Endothelial cell of umbilical vein (primary cell): ENCODE measurements at regions of chr1 and their contacts with region 1.

Region 1: DNA sequence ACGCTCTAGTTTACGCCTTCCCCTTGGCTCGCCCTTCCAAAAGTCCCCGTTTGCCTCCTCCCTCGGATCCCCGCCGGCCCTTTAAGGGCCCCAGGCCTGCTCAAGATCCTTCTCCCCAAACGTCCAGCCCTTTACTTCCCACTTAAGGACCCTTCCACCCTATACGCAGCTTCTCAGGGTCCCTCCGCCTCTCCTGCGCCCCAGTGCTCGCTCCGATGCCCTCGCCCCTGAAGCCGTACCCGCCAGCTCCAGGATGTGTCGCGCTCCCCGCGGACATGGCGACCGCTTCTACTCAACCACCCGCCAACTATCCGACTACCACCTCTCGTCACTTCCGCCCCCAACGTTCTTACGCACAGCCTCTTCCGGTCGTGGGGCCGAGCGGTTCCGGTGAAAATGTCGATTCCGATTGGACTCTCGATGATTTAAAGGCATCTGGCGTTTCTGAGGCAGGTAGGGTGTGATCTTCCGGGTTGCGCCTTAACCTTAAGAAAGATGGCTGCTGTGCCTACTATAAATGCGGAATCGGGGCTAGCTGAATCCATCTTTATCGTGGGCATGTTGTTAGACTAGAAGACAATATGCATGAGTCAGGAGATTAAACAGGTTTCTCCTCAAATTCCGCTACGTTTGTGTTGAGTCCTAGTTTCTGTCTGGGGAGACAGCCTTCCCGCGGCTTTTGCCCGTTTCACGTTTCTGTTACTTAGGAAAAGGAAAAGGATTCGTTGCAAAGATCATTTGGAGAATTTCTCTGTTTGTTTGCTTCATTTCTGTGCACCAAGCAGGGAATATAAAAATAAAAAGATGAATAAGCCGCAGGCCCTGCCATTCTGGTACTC is at the start of gene KHDC4:
- DNase-seq: peak; percentile 100
- H3K4me3 ChIP-seq: peak within 1 kb of the TSS; percentile 38 to 97 (median 92)
- H3K27ac ChIP-seq: peak within 1 kb of the TSS; percentile 60
- H3K4me1 ChIP-seq: peaks cover 46% of the 10 kb centered on the region
- H3K27me3 ChIP-seq: no peaks in the 10 kb centered on the region
- CTCF ChIP-seq: peak in 1 of 2 donors; percentile 10
- POLR2A ChIP-seq: peak; percentile 85
- total RNA-seq, gene KHDC4: 54.1 and 55.6 TPM in 2 replicates

Region 2: GRCh38 chr1:155859234-155859829 is 75.0 kb before region 1 on chr1 and contains the start of gene SYT11:
- CTCF ChIA-PET with region 1: interaction called, 3 read pairs
- POLR2A ChIA-PET with region 1: no interaction called
- dilution Hi-C with region 1: no loop called
- intact Hi-C with region 1: loop called (anchors 1 kb)
- DNase-seq: peak; percentile 95
- H3K4me3 ChIP-seq: peak within 1 kb of the TSS; percentile 52 to 79 (median 54)
- H3K27ac ChIP-seq: peak within 1 kb of the TSS; percentile 95
- H3K4me1 ChIP-seq: peaks cover 21% of the 10 kb centered on the region
- H3K27me3 ChIP-seq: no peaks in the 10 kb centered on the region
- CTCF ChIP-seq: no peak
- POLR2A ChIP-seq: no peak
- total RNA-seq, gene SYT11: 33.7 and 36.5 TPM in 2 replicates

Region 3: DNA sequence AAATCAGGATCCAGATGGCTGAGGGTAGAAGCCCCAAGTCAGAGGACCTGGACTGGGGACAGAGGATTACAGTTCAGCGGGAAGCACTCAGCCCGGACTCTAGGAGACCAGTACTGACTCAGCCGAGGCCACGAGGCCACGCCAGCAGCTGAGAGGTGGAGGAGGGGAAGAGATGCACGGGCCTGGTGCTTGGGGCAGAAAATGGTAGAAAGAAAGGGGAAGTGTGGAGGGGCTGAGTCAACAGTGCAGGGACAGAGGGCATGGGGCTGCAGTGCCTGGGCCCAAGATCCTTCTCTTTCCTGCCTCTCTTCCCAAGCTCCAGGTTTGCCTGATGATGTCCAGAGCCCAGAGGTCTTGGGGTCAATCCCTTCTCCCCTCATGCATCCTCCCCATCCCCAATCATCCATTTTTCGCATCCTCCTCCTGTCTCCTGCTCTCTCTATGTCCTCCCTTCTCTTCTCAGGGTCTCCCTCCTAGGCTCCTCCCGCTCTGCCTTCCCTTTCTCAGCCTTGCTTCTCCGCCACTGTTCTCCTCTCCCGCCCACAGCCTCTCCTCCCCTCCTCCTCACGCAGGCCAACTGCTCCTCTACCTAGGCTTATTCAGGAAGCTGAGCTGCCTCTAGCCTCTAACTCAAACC is 36.3 kb after region 1 on chr1:
- CTCF ChIA-PET with region 1: interaction called, 20 read pairs
- POLR2A ChIA-PET with region 1: interaction called, 3 read pairs
- dilution Hi-C with region 1: no loop called
- intact Hi-C with region 1: loop called (anchors 1 kb)
- DNase-seq: peak; percentile 91
- H3K4me3 ChIP-seq: no peak overlapping the region
- H3K27ac ChIP-seq: peak overlapping the region; percentile 35
- H3K4me1 ChIP-seq: peaks cover 81% of the 10 kb centered on the region
- H3K27me3 ChIP-seq: no peaks in the 10 kb centered on the region
- CTCF ChIP-seq: no peak
- POLR2A ChIP-seq: peak; percentile 74

Region 4: DNA sequence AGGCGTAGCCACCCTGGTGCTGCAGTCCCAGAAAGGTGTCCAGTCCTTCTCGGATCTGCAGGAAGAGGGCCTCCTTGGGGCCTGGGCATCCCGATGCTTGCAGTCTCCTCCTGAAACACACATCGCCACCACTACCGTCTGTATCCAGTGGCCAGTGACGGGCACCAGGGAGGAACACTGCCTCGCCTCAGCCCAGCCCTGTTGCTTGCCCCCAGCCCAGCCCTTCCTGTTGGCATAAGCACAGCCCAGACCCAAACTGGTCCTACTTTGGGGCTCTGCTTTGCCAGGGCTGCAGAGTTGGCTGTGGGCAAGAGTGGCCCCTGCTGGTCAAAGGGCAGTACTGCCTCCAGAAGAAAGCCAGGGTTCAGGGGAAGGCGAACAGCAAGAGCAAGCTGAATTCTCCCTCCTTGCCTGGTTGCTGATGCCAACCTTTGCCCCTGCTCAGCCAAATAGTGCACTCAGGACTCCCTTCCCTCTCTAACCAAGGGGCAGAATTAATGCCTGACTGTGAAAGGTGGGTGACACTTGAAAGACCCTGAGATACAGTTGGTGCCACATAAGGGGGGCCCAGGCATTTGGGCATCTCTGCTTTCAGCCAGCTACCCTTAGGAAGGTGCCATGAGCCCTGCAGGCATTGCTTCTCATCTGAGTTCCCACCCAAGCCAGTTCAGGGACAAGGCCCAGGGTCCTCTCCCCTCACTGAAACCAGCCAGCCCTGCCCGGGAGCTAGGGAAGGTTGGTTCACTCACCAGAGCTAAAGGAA is 55.1 kb after region 1 on chr1:
- CTCF ChIA-PET with region 1: interaction called, 142 read pairs
- POLR2A ChIA-PET with region 1: interaction called, 5 read pairs
- dilution Hi-C with region 1: no loop called
- intact Hi-C with region 1: loop called (anchors 1 kb)
- DNase-seq: peak; percentile 76
- H3K4me3 ChIP-seq: no peak overlapping the region
- H3K27ac ChIP-seq: no peak overlapping the region
- H3K4me1 ChIP-seq: peaks cover 6% of the 10 kb centered on the region
- H3K27me3 ChIP-seq: no peaks in the 10 kb centered on the region
- CTCF ChIP-seq: peak; percentile 95 to 98
- POLR2A ChIP-seq: no peak

Region 5: GRCh38 chr1:156020292-156021089 is 86.2 kb after region 1 on chr1 and contains the start of gene SSR2:
- CTCF ChIA-PET with region 1: interaction called, 13 read pairs
- POLR2A ChIA-PET with region 1: no interaction called
- dilution Hi-C with region 1: no loop called
- intact Hi-C with region 1: no loop called
- DNase-seq: peak; percentile 96
- H3K4me3 ChIP-seq: peak within 1 kb of the TSS; percentile 27 to 81 (median 78)
- H3K27ac ChIP-seq: peak within 1 kb of the TSS; percentile 44
- H3K4me1 ChIP-seq: peaks cover 10% of the 10 kb centered on the region
- H3K27me3 ChIP-seq: no peaks in the 10 kb centered on the region
- CTCF ChIP-seq: no peak
- POLR2A ChIP-seq: peak; percentile 97
- total RNA-seq, gene SSR2: 339 and 362 TPM in 2 replicates

Region 6: DNA sequence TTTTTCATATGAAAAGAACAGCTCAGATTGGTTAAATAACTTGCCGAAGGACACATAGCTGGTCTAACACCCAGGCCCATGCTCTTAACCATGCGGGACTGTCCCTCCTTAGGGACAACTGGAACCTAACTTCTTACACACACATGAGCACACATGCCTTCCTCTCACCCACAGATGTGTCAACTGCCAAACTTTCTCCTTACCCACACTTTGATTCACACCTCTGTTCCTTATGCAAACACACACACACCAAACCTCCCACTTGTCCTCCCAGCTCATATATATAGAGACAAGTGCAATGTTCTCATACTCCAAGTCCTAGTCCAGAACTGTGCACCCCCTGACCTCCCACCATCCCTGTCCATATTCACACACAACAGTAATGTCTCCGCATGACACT is 130.9 kb after region 1 on chr1:
- CTCF ChIA-PET with region 1: interaction called, 29 read pairs
- POLR2A ChIA-PET with region 1: no interaction called
- dilution Hi-C with region 1: no loop called
- intact Hi-C with region 1: loop called (anchors 1 kb)
- DNase-seq: no peak
- H3K4me3 ChIP-seq: no peak overlapping the region
- H3K27ac ChIP-seq: no peak overlapping the region
- H3K4me1 ChIP-seq: peaks cover 6% of the 10 kb centered on the region
- H3K27me3 ChIP-seq: no peaks in the 10 kb centered on the region
- CTCF ChIP-seq: no peak
- POLR2A ChIP-seq: no peak